ENCODE measurements at regions of chr7 and their contacts with region 1.

Region 1: DNA sequence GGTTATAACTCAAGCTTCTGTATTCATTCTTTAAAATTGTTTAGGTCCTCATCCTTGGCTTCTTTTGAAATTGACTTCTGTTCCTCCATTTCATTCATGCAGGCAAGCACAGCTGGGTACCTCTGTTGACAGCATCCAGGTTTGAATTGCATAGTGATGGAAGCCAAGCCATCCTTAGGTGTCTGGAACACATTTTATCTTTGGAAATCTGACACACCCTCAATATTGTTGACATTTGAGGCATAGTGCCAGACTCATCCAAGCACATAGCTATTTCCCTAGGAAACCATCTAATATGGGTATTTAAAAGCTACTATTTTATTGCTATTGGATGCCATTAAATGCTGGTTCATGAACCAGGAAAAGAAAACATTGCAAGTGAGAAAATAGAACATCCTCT is 142.1 kb upstream of the PTPRZ1 start:
- DNase-seq: no peak
- ATAC-seq: no peak
- H3K4me3 ChIP-seq: no peak overlapping the region
- H3K27ac ChIP-seq: no peak overlapping the region
- H3K4me1 ChIP-seq: no peaks in the 10 kb centered on the region
- H3K27me3 ChIP-seq: no peaks in the 10 kb centered on the region
- CTCF ChIP-seq: no peak
- POLR2A ChIP-seq: no peak

Region 2: GRCh38 chr7:121714559-121715303 is 16.1 kb before region 1 on chr7:
- in situ Hi-C with region 1: no loop called
- intact Hi-C with region 1: loop called (anchors 2 kb)
- DNase-seq: no peak
- ATAC-seq: no peak
- H3K4me3 ChIP-seq: no peak overlapping the region
- H3K27ac ChIP-seq: no peak overlapping the region
- H3K4me1 ChIP-seq: no peaks in the 10 kb centered on the region
- H3K27me3 ChIP-seq: no peaks in the 10 kb centered on the region
- CTCF ChIP-seq: no peak
- POLR2A ChIP-seq: no peak